ENCODE measurements at regions of chr2 and their contacts with region 1.

Region 1: DNA sequence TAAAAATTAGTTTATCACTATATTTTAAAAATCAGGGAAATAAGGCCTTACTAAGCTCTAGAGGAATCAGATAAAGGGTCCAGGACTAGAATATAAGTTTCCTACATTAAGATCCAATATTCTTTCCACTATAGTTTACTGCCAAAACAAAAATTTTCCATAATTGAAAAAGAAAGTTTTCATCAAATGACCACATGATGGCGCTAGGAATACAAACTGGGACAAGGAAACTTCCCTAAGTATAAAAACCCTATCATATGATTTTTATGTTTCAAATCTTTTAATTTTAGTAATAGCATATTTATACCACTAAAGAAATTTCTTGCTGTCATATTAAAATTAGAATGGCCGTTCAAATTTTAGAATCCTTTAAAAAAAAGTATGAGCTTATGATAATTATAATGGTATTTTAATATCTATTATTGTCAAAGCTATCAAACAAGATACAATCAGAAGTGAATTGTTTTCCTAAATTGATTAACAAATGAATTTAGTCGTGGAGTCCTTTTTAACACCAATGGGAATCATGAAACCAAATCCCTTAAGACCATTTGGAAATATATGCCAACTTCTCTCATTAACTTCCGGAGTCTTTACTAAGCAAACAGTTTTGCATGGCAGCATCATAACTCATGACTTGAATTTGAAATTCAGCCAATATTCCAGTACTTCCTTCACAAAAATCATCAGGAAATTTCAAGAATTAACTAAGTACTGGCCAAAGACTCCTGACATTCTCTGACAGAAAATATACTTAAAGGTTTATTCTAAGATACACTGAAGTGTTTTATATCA is 70.3 kb downstream of the SCN1A start:
- DNase-seq: no peak

Region 2: GRCh38 chr2:165863810-165864261 is 193.7 kb before region 1 on chr2:
- intact Hi-C with region 1: no loop called
- DNase-seq: peak in 6 of 10 donors; percentile 29 to 89 (median 38)

Region 3: DNA sequence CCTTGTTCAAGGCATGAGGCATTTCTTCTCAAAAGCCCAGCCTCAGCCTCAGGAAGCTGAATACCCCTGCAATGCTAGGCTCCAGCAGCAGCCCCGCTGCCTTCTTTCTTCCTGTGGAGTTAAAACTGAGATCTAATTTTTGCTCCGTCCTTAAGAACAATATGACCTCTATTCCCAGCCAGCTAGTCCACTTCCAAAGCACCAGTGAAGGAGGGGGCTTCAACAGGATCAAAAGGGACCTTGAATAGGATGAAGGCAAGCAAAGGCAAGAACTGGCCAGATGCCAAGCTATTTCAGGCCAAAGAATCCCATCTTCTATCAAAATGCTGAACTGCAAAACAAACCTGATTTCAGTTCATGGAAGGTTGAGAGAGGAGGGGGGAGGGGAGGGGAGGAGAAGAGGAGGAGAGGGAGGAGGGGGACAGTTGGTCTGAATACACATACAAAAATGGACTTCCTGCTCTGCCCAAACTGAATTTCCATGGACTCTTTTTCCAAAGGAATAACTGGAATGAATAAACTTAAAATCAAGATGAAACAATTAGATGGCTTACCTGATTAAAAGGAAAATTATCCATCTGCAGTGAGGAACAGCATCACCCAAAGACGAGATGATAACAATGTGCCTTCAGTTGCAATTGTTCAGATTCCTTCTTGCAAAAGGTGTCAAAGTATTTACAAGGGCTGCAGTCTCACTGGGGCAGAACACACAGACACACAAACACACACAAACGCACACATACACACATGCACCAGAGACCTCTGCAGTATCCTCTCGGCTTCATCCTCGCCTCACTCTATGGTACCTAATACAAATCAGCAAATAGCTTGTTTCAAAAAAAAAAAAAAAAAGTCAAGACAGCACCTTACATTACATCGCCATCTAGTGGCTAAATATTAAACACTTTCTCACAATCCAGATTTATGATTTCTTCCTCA is 69.9 kb after region 1 on chr2 and contains the start of gene SCN1A:
- intact Hi-C with region 1: loop called (anchors 1 kb)
- DNase-seq: peak in 5 of 10 donors; percentile 17 to 86 (median 36)

Measured in posterior cingulate gyrus (tissue), 11 donors.